ENCODE measurements at regions of chr1 and their contacts with region 1.

Region 1: GRCh38 chr1:101247404-101248287 is 10.8 kb downstream of the S1PR1 start:
- DNase-seq: no peak
- H3K4me3 Mint-ChIP-seq: no peak overlapping the region
- H3K27ac Mint-ChIP-seq: peak overlapping the region; percentile 48
- H3K4me1 Mint-ChIP-seq: peaks cover 30% of the 10 kb centered on the region
- H3K27me3 Mint-ChIP-seq: no peaks in the 10 kb centered on the region

Region 2: GRCh38 chr1:101221945-101222429 is 25.7 kb before region 1 on chr1:
- CTCF ChIA-PET with region 1: no interaction called
- POLR2A ChIA-PET with region 1: no interaction called
- DNase-seq: no peak
- H3K4me3 Mint-ChIP-seq: peak overlapping the region; percentile 55
- H3K27ac Mint-ChIP-seq: peak overlapping the region; percentile 78
- H3K4me1 Mint-ChIP-seq: peaks cover 28% of the 10 kb centered on the region
- H3K27me3 Mint-ChIP-seq: no peaks in the 10 kb centered on the region

Region 3: GRCh38 chr1:101267082-101267481 is 19.4 kb after region 1 on chr1:
- CTCF ChIA-PET with region 1: interaction called, 12 read pairs
- POLR2A ChIA-PET with region 1: no interaction called
- DNase-seq: no peak
- H3K4me3 Mint-ChIP-seq: no peak overlapping the region
- H3K27ac Mint-ChIP-seq: no peak overlapping the region
- H3K4me1 Mint-ChIP-seq: peaks cover 55% of the 10 kb centered on the region
- H3K27me3 Mint-ChIP-seq: no peaks in the 10 kb centered on the region

Region 4: DNA sequence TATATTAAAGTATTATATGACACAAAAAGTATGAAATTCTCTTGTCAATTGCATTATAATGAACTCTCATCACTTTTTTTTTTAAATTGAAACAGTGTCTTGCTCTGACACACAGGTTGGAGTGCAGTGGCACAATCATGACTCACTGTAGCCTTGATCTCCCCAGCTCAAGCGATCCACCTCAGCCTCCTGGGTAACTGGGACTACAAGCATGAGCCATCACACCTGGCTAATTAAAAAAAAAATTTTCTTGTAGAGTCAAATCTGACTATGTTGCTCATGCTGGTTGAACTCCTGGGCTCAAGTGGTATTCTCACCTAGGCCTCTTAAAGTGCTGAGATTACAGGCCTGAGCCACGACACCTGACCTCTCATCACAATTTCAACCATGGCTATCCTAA is 248.5 kb after region 1 on chr1:
- CTCF ChIA-PET with region 1: no interaction called
- POLR2A ChIA-PET with region 1: no interaction called
- DNase-seq: no peak
- H3K4me3 Mint-ChIP-seq: no peak overlapping the region
- H3K27ac Mint-ChIP-seq: no peak overlapping the region
- H3K4me1 Mint-ChIP-seq: no peaks in the 10 kb centered on the region
- H3K27me3 Mint-ChIP-seq: peaks cover 5% of the 10 kb centered on the region